Right cardiac atrium (tissue), 5 donors: ENCODE measurements at regions of chr7 and their contacts with region 1.

Region 1: DNA sequence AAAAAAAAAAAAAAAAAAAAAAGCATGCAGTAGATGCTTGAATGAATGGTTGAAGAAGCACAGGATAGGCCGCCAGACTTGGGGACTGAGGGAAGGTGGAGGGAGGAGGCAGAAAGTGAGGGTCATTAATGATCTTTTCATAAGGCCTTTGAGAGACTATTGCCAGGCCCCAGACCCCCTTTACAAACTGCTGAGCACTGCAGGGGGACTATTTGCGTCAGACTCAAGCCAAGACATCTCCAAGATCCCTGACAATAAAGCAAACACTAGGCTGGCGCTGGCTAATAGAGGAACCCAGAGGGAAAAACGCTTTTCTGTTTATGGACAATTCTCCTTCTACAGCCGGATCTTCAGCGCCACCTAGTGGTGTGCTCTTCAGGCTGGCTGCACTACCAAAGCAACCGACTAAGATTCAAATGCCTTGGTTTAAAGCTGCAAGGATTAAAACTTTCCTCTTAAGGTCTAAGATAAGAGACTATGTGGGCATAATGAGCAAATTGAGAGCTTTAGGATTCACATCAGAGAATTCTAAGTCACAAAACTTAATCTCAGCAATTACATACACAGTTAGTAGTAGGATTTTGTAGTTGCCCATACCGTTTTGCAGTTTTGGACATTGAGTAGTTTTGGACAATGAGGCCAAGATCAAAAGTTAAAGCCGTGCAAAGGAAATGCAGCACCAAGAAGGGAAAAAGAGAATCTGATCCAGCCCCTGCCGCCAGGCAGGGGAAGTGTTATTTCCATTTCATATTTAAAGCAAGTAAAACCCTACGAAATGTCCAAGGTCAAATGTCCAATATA is 17.9 kb upstream of the AGK start:
- DNase-seq: peak; percentile 60 to 86 (median 77)
- ATAC-seq: peak; percentile 71 to 84
- H3K4me3 ChIP-seq: no peak overlapping the region
- H3K27ac ChIP-seq: no peak overlapping the region
- H3K4me1 ChIP-seq: no peaks in the 10 kb centered on the region
- H3K27me3 ChIP-seq: no peaks in the 10 kb centered on the region

Region 2: DNA sequence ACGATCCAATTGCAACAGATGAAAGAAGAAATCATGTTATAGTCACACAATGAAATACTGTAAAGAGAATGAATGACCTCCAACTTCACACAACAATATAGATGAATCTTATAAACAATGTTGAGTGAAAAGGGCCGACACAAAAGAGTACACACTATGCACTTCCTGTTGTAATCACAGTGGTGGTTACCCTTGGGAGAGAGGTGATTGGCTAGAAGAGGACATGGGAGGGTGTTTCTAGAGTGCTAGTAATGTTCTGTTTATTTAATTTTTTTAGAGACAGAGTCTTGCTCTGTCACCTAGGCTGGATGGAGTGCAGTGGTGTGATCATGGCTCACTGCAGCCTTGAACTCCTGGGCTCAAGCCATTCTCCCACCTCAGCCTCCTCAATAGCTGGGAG is 754.4 kb before region 1 on chr7:
- intact Hi-C with region 1: no loop called
- DNase-seq: no peak
- ATAC-seq: no peak
- H3K4me3 ChIP-seq: no peak overlapping the region
- H3K27ac ChIP-seq: no peak overlapping the region
- H3K4me1 ChIP-seq: no peaks in the 10 kb centered on the region
- H3K27me3 ChIP-seq: no peaks in the 10 kb centered on the region

Region 3: DNA sequence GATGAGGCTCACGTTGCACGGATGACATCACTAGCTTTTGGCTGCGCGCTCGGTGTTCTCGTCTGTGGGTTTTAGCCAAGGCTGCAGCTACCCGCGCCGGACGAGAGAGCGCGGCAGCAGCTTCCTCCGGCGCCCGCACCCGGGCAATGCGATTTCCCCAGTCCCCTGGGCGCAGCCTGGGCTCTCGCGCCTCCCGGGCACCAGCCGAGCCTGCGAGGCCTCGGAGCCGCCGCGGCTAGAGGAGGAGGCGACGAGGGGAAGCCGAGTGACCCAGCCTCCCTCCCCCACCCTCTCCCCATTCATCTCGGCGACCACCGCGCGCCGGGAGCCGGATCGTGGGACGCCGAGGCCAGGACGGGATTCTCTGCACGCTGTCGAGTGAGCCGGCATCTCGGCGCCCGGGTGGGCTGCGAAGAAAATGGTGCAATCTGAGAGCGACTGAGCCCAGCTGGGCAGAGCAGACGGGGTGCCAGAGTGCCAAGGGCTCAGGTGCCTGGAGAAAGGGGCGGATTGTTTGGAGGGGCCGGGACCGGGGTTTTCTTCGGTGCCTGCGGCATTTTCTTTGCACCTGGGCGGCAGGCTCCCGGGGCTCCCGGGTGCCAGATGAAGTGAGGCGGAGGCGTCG is 460.7 kb before region 1 on chr7:
- intact Hi-C with region 1: loop called in 1 of 4 experiments (anchors 10 kb)
- DNase-seq: peak; percentile 60 to 85 (median 81)
- ATAC-seq: peak; percentile 81 to 82
- H3K4me3 ChIP-seq: peak overlapping the region; percentile 61
- H3K27ac ChIP-seq: no peak overlapping the region
- H3K4me1 ChIP-seq: peaks cover 5% of the 10 kb centered on the region
- H3K27me3 ChIP-seq: peaks cover 2% of the 10 kb centered on the region